Left ventricle myocardium inferior (tissue), 1 donor: ENCODE measurements at regions of chr17 and their contacts with region 1.

Region 1: GRCh38 chr17:65100316-65101140 is 36.6 kb upstream of the RGS9 start:
- DNase-seq: peak; percentile 87
- H3K4me3 ChIP-seq: peak overlapping the region; percentile 70
- H3K27ac ChIP-seq: peak overlapping the region; percentile 70
- H3K4me1 ChIP-seq: peaks cover 17% of the 10 kb centered on the region
- H3K27me3 ChIP-seq: no peaks in the 10 kb centered on the region
- CTCF ChIP-seq: peak; percentile 83

Region 2: DNA sequence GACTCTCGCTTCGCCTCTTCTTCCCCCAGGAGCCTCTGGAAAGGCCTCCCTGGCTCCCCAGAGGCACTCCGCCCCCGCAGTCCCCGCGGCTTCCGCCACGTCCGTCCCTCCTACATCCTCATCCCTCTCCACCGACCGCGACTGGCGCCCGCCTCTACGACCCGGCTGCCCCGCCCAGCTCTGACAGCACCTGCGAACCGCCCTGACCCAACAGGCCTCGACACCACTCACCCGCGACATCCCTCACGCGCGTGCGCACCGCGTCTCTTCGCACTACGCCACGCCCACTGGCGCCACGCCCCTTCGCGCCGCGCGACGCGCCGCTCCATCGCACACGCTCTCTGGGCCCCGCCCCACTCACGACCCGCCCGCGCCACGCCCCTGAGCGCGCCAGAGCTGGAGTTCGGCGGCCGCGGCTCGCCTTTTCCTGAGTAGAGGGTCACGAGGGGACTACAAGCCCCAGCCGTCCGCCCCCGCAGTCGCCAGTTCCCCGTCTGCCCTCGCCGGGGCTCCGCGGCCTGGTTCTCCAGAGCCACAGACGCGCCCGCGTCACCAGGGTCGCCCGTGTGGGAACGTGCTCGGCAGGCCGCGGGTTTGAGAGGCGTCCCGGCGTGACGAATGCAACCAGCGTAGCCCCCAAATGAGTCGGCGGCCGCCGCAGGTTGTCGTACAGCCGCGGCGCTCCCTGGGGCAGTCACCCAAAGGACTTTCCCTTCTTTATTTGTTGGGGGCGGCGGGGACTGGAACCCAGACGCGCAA is 125.0 kb before region 1 on chr17:
- intact Hi-C with region 1: loop called (anchors 10 kb)
- DNase-seq: peak; percentile 95
- H3K4me3 ChIP-seq: peak overlapping the region; percentile 94
- H3K27ac ChIP-seq: peak overlapping the region; percentile 99
- H3K4me1 ChIP-seq: peaks cover 31% of the 10 kb centered on the region
- H3K27me3 ChIP-seq: no peaks in the 10 kb centered on the region
- CTCF ChIP-seq: no peak